Panc1 (cell line): ENCODE measurements at regions of chr6 and their contacts with region 1.

Region 1: GRCh38 chr6:111625461-111626391 is 20.0 kb upstream of the TRAF3IP2 start:
- DNase-seq: no peak
- ATAC-seq: no peak
- H3K4me3 ChIP-seq: no peak overlapping the region
- H3K27ac ChIP-seq: no peak overlapping the region
- H3K4me1 ChIP-seq: peaks cover 4% of the 10 kb centered on the region; the same call in 1 of the 2 replicates
- H3K27me3 ChIP-seq: no peaks in the 10 kb centered on the region
- CTCF ChIP-seq: no peak

Region 2: DNA sequence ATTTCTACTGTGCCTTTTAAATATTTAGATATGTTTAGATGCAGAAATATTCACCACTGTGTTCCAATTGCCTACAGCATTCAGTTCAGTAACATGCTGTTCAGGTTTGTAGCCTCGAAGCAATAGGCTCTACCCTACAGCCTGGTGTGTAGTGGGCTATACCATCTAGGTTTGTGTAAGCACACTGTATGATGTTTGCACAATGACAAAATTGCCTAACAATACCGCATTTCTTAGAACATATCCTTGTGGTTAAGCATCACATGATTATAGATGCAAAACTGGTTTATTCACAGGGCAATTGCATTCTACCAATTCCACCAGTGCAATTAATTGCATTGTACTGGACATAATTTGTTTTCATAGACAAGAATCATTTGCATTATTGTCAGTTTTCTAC is 1141.4 kb before region 1 on chr6:
- CTCF ChIA-PET with region 1: no interaction called
- POLR2A ChIA-PET with region 1: no interaction called
- in situ Hi-C with region 1: no loop called
- intact Hi-C with region 1: no loop called
- DNase-seq: no peak
- ATAC-seq: no peak
- H3K4me3 ChIP-seq: no peak overlapping the region
- H3K27ac ChIP-seq: no peak overlapping the region
- H3K4me1 ChIP-seq: no peaks in the 10 kb centered on the region
- H3K27me3 ChIP-seq: no peaks in the 10 kb centered on the region
- CTCF ChIP-seq: no peak

Region 3: GRCh38 chr6:111591104-111591900 is 34.4 kb before region 1 on chr6:
- CTCF ChIA-PET with region 1: no interaction called
- POLR2A ChIA-PET with region 1: interaction called, 10 read pairs
- in situ Hi-C with region 1: no loop called
- intact Hi-C with region 1: no loop called
- DNase-seq: peak; percentile 98
- ATAC-seq: peak; percentile 89
- H3K4me3 ChIP-seq: peak overlapping the region in 1 of 2 experiments; percentile 34; a peak in 3 of 4 replicates
- H3K27ac ChIP-seq: peak overlapping the region; percentile 94
- H3K4me1 ChIP-seq: peaks cover 76% of the 10 kb centered on the region
- H3K27me3 ChIP-seq: no peaks in the 10 kb centered on the region
- CTCF ChIP-seq: no peak

Region 4: GRCh38 chr6:112906726-112907125 is 1281.0 kb after region 1 on chr6:
- CTCF ChIA-PET with region 1: interaction called, 11 read pairs
- POLR2A ChIA-PET with region 1: no interaction called
- in situ Hi-C with region 1: no loop called
- intact Hi-C with region 1: no loop called
- DNase-seq: no peak
- ATAC-seq: no peak
- H3K4me3 ChIP-seq: no peak overlapping the region
- H3K27ac ChIP-seq: no peak overlapping the region; the same call in 1 of the 2 replicates
- H3K4me1 ChIP-seq: no peaks in the 10 kb centered on the region
- H3K27me3 ChIP-seq: no peaks in the 10 kb centered on the region
- CTCF ChIP-seq: no peak